ENCODE measurements at regions of chr15 and their contacts with region 1.

Region 1: DNA sequence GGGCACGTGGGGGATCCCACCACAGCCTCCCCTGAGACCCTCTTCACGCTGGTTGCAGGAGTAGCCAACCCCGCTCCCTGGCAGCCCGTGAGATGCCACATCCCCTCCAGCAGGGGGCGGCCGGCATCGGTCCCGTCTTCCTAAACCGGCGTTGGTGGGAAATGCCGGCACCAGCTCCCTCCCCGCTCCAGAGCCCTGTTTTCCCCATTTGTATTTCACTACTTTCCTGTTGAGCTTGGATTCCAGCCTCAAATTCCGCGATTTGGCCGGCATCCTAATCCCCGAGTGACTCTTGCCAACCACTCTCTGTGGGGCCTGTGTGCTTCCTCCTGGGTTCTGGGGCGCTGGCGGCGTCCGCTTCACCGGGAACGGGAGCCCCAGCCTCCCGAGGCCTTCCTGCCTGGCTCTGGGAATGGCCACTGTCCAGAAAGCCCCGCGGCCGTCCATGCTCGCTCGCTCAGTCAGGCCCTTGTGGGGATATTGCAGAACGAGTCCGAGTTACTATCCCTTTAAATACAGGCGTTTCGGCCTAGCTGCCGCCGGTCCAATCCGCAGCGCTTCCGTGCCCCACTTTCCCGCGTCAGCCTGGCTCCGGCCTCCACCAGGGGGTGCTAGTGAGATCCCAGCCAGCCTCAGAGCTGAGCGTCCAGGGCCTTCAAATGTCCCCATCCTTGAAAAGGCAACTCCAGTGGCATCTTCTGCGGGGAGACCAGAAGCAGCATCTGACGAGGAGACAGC is 8.1 kb upstream of the ADAMTS17 start:
- DNase-seq: peak; percentile 90 to 99 (median 96)

Region 2: DNA sequence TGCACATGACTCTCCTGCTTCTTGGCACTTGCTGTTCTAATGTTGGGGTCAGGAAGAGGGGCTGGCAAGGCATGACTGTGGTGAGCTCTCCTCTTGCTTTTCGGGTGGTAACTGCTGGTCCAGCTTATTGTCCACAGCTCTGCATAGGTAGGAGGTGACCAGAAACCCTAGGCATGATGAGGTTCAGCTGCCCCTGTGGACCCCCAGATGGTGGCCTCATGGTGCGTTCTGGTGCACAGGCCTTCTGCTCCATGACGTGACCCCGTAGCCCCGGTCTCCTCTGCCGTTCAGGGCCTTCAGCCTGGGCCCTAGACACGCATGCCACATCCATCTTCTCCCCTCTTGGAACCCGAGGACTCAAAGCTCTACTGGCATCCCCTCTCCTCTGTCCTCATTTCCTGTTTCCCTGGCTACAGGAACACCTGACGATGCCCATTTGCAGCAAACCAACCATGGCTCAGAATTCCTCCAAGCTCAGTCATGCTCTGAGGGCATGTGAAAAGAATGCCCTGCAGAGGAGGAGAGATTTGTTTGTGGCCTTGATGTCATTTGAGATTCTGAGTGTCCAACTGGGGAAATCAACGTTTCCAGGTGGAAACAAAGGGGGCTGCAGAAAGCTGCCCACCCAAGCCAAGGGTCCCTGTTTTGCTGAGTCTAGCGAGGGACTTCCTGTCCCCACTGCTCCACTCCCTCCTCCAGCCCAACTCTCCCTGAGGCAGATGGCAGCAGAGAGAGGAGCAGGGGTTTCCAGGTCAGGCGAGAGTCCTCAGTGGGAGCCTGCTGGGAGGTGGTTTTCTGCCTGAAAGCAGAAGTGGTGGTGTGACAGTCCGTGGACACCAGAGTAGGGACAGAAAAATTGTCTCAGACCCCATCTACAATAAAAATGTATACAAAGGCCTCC is 417.9 kb before region 1 on chr15:
- intact Hi-C with region 1: loop called (anchors 5 kb)
- DNase-seq: peak in 1 of 10 donors; percentile 38

Region 3: GRCh38 chr15:100572362-100572983 is 222.6 kb after region 1 on chr15:
- intact Hi-C with region 1: loop called (anchors 1 kb)
- DNase-seq: no peak

Region 4: DNA sequence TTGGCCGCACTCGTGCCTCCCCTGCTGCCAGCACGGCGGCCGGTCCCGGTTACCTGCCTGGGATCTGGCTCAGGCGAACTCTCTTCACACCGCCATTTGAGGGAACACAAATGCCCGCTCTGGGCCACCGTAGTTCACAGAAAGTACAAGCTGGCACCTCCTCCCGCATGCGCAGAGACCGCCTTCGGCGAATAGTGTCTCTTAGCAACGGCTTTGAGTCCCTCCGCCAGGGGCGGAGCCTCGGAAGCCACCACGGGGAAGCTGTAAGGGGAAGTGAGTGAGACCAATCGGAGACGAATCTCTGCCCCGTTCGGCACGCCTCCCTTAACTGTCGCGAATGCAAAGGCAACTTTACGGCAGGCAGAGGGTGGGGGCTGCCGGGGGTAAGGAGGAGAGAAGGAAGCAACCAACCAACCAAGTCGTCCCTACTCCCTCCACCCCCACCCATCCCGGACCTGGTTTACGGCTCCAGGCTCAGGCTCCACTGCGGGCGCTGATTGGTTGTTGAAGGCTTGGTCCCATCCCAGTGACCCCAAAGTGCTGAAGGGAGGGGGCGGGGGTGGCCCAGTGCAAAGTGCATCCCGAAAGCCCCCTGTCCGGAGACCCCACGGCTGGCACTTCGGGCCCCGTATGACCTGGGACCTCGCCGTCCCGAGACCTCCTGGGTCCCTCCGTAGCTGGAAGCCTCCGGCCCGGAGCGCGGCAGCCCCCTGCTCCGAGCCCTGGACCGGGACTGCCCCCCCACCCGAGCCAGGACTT is 252.4 kb after region 1 on chr15 and contains the starts of genes ASB7 and LINS1:
- intact Hi-C with region 1: loop called (anchors 1 kb)
- DNase-seq: peak; percentile 99 to 100 (median 100)